ENCODE measurements at regions of chr1 and their contacts with region 1.

Region 1: GRCh38 chr1:45011837-45012638 is at the start of gene UROD:
- DNase-seq: peak; percentile 97 to 98
- H3K4me3 ChIP-seq: peak within 1 kb of the TSS; percentile 56
- H3K4me1 ChIP-seq: peaks cover 11% of the 10 kb centered on the region
- H3K27me3 ChIP-seq: no peaks in the 10 kb centered on the region

Region 2: GRCh38 chr1:44775078-44775929 is 236.7 kb before region 1 on chr1 and contains the start of gene RPS8:
- in situ Hi-C with region 1: no loop called
- DNase-seq: peak; percentile 86 to 93
- H3K4me3 ChIP-seq: peak within 1 kb of the TSS; percentile 74
- H3K4me1 ChIP-seq: peaks cover 16% of the 10 kb centered on the region
- H3K27me3 ChIP-seq: no peaks in the 10 kb centered on the region

Region 3: DNA sequence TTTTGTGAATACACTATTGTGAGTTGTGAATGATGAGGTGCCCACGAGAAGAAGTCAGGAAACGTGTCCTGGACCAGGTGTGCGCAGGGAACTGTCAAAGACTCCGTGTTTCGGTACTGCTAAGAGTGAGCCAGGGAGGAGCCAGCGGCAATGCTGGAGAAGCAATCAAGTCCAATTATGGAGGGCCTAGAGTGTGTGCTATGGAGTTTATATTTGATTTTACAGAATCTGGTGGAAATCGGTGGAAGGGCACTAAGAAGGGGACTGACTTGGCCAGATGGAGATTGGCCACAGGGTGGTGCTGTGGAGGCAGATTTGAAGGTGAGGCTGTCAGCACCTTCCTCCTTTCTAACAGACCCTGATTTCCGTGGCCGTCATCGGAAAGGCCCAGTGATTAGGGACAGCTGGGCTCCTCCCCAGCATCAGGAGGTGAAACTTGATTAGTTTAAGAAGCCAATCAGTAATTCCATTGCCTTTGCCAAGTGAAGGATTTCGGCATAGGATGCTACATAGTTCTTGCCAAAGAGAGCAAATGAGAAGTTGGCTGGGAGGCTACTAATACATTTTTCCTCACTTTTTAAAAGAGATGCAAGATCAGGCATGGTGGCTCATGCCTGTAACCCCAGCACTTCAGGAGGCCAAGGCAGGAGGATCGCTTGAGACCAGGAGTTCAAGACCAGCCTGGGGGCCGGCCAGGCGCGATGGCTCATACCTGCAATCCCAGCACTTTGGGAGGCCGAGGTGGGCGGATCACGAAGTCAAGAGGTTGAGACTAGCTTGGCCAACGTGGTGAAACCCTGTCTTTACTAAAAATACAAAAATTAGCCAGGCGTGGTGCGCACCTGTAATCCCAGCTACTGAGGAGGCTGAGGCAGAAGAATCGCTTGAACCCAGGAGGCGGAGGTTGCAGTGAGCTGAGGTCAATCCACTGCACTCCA is 176.0 kb before region 1 on chr1:
- in situ Hi-C with region 1: loop called (anchors 5 kb)
- DNase-seq: peak; percentile 75 to 96
- H3K4me3 ChIP-seq: no peak overlapping the region
- H3K4me1 ChIP-seq: no peaks in the 10 kb centered on the region
- H3K27me3 ChIP-seq: no peaks in the 10 kb centered on the region

Region 4: DNA sequence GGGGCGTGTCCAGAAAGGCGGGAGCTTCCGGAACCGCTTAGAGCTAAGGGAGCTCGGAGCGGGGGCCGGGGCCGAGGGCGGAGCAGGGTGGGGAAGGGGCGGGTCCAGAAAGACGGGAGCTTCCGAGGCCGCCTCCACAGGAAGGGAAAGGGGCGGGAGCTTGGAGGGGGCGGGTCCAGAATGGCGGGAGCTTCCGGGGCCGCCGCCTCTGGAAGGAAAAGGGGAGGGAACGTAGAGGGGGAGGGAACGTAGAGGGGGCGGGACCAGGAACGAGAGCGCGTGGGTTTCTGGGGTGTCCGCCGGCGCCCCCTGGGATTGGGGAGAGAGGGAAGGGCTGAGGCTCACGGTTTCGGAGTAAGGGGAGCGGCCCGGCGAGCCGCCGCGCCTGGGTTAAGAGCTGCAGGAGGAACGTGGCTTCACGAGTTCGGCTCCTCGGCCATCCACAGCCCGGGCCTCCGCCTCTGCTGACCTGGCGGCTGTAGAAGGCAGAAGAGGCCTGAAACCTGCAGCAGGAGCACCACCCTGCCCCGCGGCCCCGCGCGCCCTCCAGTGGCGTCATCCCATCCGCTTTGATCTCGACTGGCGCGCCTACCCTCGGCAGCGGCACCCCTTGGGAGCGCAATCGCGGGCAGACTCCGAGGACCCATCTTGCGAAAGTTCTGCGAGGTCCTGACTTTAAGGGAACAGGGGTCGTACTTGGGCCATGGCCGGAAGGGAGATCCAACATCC is 291.7 kb after region 1 on chr1:
- in situ Hi-C with region 1: loop called (anchors 5 kb)
- DNase-seq: peak; percentile 90 to 99
- H3K4me3 ChIP-seq: peak overlapping the region; percentile 70
- H3K4me1 ChIP-seq: peaks cover 17% of the 10 kb centered on the region
- H3K27me3 ChIP-seq: no peaks in the 10 kb centered on the region

Region 5: GRCh38 chr1:45490626-45491486 is 478.8 kb after region 1 on chr1 and contains the start of gene TESK2:
- in situ Hi-C with region 1: loop called (anchors 5 kb)
- DNase-seq: peak; percentile 97 to 99
- H3K4me3 ChIP-seq: peak within 1 kb of the TSS; percentile 69
- H3K4me1 ChIP-seq: peaks cover 14% of the 10 kb centered on the region
- H3K27me3 ChIP-seq: no peaks in the 10 kb centered on the region

Region 6: GRCh38 chr1:45569962-45570581 is 558.0 kb after region 1 on chr1:
- in situ Hi-C with region 1: loop called (anchors 10 kb)
- DNase-seq: peak; percentile 66 to 74
- H3K4me3 ChIP-seq: no peak overlapping the region
- H3K4me1 ChIP-seq: peaks cover 3% of the 10 kb centered on the region; the same call in 1 of the 2 replicates
- H3K27me3 ChIP-seq: no peaks in the 10 kb centered on the region